ENCODE measurements at regions of chr2 and their contacts with region 1.

Region 1: DNA sequence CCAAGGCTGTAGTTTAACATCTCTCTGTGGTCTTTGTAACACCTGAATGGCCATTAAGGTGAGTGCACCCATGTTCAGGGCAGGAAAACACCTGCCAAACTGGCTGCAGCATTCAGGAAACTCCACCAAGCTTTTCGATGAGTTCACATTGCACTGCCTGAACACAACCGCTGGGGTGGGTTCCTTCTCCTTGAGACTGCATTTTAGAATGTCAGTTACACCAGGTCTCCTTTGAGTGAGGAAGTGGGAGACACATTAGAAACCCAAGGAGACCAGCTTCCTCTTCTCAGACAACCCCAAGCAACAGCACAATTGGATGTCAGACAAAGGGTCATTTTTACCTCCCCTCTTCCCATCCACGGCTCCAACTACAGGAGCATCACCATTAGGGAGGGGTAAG is 35.2 kb downstream of the CYRIA start:
- DNase-seq: no peak
- ATAC-seq: 0 out of 3 replicates have a peak, but pooled peaks have one; percentile 19
- H3K4me3 ChIP-seq: no peak overlapping the region
- H3K27ac ChIP-seq: no peak overlapping the region
- H3K4me1 ChIP-seq: peaks cover 20 to 66% of the 10 kb centered on the region in 2 experiments
- H3K27me3 ChIP-seq: no peaks in the 10 kb centered on the region
- CTCF ChIP-seq: peak in 1 of 3 experiments; percentile 23; a peak in 1 of 6 replicates
- EP300 ChIP-seq: no peak
- POLR2A ChIP-seq: no peak
- RAD21 ChIP-seq: peak in 1 of 2 experiments; percentile 44; a peak in 2 of 4 replicates

Region 2: GRCh38 chr2:16665748-16666448 is 35.4 kb after region 1 on chr2 and contains the start of gene CYRIA:
- CTCF ChIA-PET with region 1: interaction called, 3 read pairs
- POLR2A ChIA-PET with region 1: interaction called, 3 read pairs
- in situ Hi-C with region 1: no loop called
- intact Hi-C with region 1: loop called (anchors 5 kb)
- DNase-seq: peak; percentile 69 to 87 (median 82)
- ATAC-seq: peak; percentile 87
- H3K4me3 ChIP-seq: peak within 1 kb of the TSS; percentile 33
- H3K27ac ChIP-seq: no peak within 1 kb of the TSS
- H3K4me1 ChIP-seq: peaks cover 16 to 26% of the 10 kb centered on the region in 2 experiments
- H3K27me3 ChIP-seq: peaks cover 0 to 17% of the 10 kb centered on the region in 2 experiments; a peak in 4 of 5 replicates
- CTCF ChIP-seq: no peak
- EP300 ChIP-seq: no peak
- POLR2A ChIP-seq: no peak
- RAD21 ChIP-seq: no peak
- polyA plus RNA-seq, gene CYRIA: 2.8 to 3.3 TPM

Region 3: DNA sequence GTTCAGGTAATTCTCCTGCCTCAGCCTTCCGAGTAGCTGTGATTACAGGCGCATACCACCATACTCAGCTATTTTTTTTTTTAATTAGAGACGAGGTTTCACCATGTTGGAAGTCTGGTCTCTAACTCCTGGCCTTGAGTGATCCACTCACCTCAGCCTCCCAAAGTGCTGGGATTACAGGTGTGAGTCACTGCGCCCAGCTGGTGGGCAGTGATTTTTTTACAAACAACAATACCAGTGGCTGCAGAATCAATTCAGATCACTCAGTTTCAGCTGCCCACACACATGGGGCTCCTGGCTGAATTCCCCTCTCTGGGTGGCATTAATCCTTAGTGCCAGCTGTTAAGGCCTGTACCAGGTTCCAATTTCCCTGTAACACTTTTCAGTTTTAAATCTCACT is 48.5 kb after region 1 on chr2:
- CTCF ChIA-PET with region 1: no interaction called
- POLR2A ChIA-PET with region 1: no interaction called
- in situ Hi-C with region 1: no loop called
- intact Hi-C with region 1: no loop called
- DNase-seq: no peak
- ATAC-seq: no peak
- H3K4me3 ChIP-seq: no peak overlapping the region
- H3K27ac ChIP-seq: no peak overlapping the region
- H3K4me1 ChIP-seq: no peaks in the 10 kb centered on the region
- H3K27me3 ChIP-seq: peaks cover 0 to 7% of the 10 kb centered on the region in 2 experiments; a peak in 1 of 5 replicates
- CTCF ChIP-seq: no peak
- EP300 ChIP-seq: no peak
- POLR2A ChIP-seq: no peak
- RAD21 ChIP-seq: no peak

Region 4: GRCh38 chr2:17506736-17507616 is 876.5 kb after region 1 on chr2:
- CTCF ChIA-PET with region 1: no interaction called
- POLR2A ChIA-PET with region 1: no interaction called
- in situ Hi-C with region 1: no loop called
- intact Hi-C with region 1: no loop called
- DNase-seq: peak in 2 of 4 experiments; percentile 41 to 44
- ATAC-seq: peak; percentile 79
- H3K4me3 ChIP-seq: no peak overlapping the region
- H3K27ac ChIP-seq: peak overlapping the region; percentile 64
- H3K4me1 ChIP-seq: peaks cover 0 to 12% of the 10 kb centered on the region in 2 experiments; a peak in 2 of 5 replicates
- H3K27me3 ChIP-seq: no peaks in the 10 kb centered on the region
- CTCF ChIP-seq: no peak
- EP300 ChIP-seq: no peak
- POLR2A ChIP-seq: no peak
- RAD21 ChIP-seq: no peak

Measured in K562 (cell line).